ENCODE measurements at regions of chr1 and their contacts with region 1.

Region 1: GRCh38 chr1:160646711-160647328 is at the start of gene SLAMF1:
- DNase-seq: peak; percentile 55
- ATAC-seq: peak; percentile 53
- H3K4me3 Mint-ChIP-seq: peak within 1 kb of the TSS; percentile 87
- H3K27ac Mint-ChIP-seq: peak within 1 kb of the TSS; percentile 82
- H3K4me1 Mint-ChIP-seq: peaks cover 63% of the 10 kb centered on the region
- H3K27me3 Mint-ChIP-seq: no peaks in the 10 kb centered on the region
- total RNA-seq, gene SLAMF1: 48.5 to 50.1 TPM

Region 2: DNA sequence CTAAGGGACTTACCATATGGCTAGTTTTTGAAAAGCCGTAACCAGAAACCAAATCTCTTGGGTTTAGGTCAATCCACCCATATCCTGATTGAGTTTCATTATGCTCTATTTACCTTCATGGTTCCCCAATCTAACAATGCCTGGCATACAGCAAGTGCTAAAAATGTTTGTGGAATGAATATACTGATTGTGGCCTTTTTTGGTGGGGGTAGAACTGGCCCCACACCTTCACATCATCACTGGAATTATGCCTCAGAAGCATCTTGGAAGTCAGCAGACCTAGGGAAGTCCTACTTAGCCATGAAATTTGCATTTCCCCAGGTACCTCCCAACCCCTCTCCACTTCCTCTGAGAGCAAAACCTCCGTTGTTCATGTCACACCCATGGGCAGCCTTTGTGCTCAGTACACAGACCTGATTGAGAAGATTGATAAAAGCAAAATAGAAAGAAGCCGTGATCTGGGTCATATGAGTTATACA is 17.8 kb after region 1 on chr1:
- CTCF ChIA-PET with region 1: interaction called, 28 read pairs
- POLR2A ChIA-PET with region 1: interaction called, 5 read pairs
- DNase-seq: peak; percentile 67
- ATAC-seq: peak; percentile 82
- H3K4me3 Mint-ChIP-seq: peak overlapping the region; percentile 75
- H3K27ac Mint-ChIP-seq: peak overlapping the region; percentile 92
- H3K4me1 Mint-ChIP-seq: peaks cover 71% of the 10 kb centered on the region
- H3K27me3 Mint-ChIP-seq: no peaks in the 10 kb centered on the region

Region 3: DNA sequence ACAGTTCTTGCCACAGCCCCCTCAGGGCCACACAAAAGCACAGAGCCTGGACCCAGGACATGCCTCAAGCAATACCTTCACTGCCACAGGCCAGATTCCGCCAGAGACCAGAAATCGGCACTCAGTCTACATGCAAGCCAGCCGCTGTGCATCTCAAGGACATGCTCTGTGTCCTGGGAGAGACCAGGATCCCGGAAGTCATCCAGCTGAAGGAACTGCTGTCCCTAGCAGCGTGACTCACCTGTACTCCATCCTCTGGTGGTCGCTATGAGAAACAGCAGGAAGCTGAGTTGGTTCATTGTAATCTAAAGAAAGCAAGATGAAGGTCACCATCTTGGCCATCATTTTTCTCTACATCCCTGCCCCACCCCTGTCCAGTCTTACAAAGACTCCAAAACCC is 237.8 kb after region 1 on chr1:
- CTCF ChIA-PET with region 1: no interaction called
- POLR2A ChIA-PET with region 1: no interaction called
- DNase-seq: no peak
- ATAC-seq: no peak
- H3K4me3 Mint-ChIP-seq: no peak overlapping the region
- H3K27ac Mint-ChIP-seq: no peak overlapping the region
- H3K4me1 Mint-ChIP-seq: peaks cover 10% of the 10 kb centered on the region
- H3K27me3 Mint-ChIP-seq: peaks cover 4% of the 10 kb centered on the region